CD4-positive, alpha-beta memory T cell (primary cell): ENCODE measurements at regions of chr13 and their contacts with region 1.

Region 1: DNA sequence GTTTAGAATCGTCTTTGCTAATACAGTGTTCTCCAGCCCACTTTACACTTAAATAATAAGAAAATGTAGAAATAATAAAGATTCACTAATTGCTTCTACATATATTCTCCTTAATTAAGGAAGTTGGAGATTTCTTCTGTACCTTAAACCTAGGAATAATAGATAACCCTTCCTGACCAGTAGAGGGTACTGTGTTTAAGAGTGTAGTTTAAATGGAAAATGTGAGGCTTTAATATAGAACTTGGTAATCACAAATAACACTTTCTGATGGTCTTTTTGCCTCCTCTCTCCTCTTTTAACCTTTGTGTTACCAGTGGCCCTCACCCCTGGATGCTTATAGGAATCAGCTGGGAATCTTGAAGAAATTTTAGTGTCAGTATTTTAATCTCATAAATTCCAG is 20.7 kb downstream of the POMP start:
- DNase-seq: no peak
- H3K4me3 ChIP-seq: no peak overlapping the region
- H3K4me3 Mint-ChIP-seq: no peak overlapping the region
- H3K27ac ChIP-seq: no peak overlapping the region
- H3K27ac Mint-ChIP-seq: peak overlapping the region in 3 of 7 donors; percentile 25 to 54 (median 41)
- H3K4me1 ChIP-seq: no peaks in the 10 kb centered on the region
- H3K4me1 Mint-ChIP-seq: peaks cover 0 to 4% (median 1%) of the 10 kb centered on the region in 4 donors
- H3K27me3 ChIP-seq: no peaks in the 10 kb centered on the region
- H3K27me3 Mint-ChIP-seq: no peaks in the 10 kb centered on the region

Region 2: GRCh38 chr13:28666897-28667488 is 12.6 kb before region 1 on chr13:
- CTCF ChIA-PET with region 1: no interaction called
- POLR2A ChIA-PET with region 1: no interaction called
- intact Hi-C with region 1: no loop called
- DNase-seq: no peak
- H3K4me3 ChIP-seq: no peak overlapping the region
- H3K4me3 Mint-ChIP-seq: no peak overlapping the region
- H3K27ac ChIP-seq: no peak overlapping the region
- H3K27ac Mint-ChIP-seq: peak overlapping the region in 2 of 7 donors; percentile 17 to 30
- H3K4me1 ChIP-seq: peaks cover 3% of the 10 kb centered on the region
- H3K4me1 Mint-ChIP-seq: peaks cover 11 to 18% (median 16%) of the 10 kb centered on the region in 4 donors
- H3K27me3 ChIP-seq: no peaks in the 10 kb centered on the region
- H3K27me3 Mint-ChIP-seq: no peaks in the 10 kb centered on the region

Region 3: DNA sequence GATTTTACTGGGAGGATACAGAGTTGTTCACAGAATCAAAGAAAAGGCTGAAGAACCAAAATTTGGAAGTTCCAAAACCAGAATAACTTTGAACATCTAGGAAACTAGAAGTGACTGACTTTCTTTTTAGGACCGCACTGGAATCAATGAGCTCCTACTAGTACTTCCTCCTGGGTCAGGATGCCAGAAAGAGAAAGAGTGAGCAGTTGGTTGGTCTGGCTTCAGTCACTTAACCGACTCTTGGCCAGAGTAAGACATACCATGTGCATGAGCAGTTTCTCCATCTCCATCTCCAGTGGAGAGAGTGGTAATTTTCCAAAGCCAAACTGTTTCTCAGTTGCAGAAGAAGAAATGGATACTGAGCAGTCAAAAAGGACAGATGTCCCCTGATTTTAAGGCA is 113.4 kb after region 1 on chr13:
- CTCF ChIA-PET with region 1: interaction called, 4 read pairs
- POLR2A ChIA-PET with region 1: no interaction called
- intact Hi-C with region 1: loop called (anchors 1 kb)
- DNase-seq: no peak
- H3K4me3 ChIP-seq: no peak overlapping the region
- H3K4me3 Mint-ChIP-seq: no peak overlapping the region
- H3K27ac ChIP-seq: no peak overlapping the region
- H3K27ac Mint-ChIP-seq: no peak overlapping the region
- H3K4me1 ChIP-seq: no peaks in the 10 kb centered on the region
- H3K4me1 Mint-ChIP-seq: peaks cover 0 to 4% (median 0%) of the 10 kb centered on the region in 4 donors
- H3K27me3 ChIP-seq: no peaks in the 10 kb centered on the region
- H3K27me3 Mint-ChIP-seq: peaks cover 7 to 20% of the 10 kb centered on the region in 2 donors